Activated naive CD4-positive, alpha-beta T cell treated with anti-CD3 and anti-CD28 coated beads for 36 hours (primary cell): ENCODE measurements at regions of chr4 and their contacts with region 1.

Region 1: DNA sequence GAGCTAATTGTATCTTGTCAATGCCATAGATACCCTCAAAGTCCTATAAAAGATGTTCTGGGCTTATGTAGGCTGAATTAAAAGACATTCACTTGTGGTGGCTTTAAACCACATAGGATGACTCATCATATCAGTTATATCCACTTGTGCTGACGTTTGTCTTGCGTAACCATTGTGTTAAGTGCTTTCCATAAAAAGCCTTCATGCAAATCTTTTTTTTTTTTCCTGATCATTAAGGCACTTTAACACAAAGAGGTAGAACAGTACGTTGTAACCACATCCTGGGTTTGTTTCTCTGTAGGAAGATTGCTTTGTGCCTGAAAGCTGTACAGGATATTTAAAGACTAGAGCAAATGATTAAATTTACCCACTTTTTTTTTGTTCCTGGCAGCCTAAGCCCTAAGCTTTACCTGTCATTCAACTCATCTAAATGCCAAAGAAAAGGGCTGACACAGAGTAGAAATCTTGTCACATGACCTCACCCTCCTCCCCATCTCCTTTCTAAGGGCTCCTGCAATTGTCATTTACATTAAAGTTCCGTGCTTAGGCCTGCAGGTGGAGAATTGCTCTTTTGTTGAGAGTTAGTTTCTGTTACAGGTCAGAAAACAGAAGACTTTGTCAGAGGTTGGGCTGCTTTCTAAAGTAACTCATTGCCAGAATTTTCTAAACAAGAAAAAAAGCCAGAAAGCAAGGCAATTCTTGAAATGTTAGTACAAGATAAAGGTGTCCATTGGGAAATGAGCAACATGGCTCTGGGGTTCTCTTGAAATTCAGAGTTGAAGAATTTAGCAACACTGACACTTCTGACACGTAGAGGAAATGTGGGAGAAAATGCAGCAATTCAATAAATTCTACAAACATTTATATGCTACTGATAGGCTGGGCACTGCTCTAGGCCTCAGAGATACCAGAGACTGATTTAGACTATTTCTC is 555.6 kb downstream of the PPARGC1A start:
- DNase-seq: peak; percentile 69
- H3K4me3 Mint-ChIP-seq: peak overlapping the region; percentile 45
- H3K27ac Mint-ChIP-seq: peak overlapping the region; percentile 98
- H3K4me1 Mint-ChIP-seq: peaks cover 38% of the 10 kb centered on the region
- H3K27me3 Mint-ChIP-seq: no peaks in the 10 kb centered on the region

Region 2: DNA sequence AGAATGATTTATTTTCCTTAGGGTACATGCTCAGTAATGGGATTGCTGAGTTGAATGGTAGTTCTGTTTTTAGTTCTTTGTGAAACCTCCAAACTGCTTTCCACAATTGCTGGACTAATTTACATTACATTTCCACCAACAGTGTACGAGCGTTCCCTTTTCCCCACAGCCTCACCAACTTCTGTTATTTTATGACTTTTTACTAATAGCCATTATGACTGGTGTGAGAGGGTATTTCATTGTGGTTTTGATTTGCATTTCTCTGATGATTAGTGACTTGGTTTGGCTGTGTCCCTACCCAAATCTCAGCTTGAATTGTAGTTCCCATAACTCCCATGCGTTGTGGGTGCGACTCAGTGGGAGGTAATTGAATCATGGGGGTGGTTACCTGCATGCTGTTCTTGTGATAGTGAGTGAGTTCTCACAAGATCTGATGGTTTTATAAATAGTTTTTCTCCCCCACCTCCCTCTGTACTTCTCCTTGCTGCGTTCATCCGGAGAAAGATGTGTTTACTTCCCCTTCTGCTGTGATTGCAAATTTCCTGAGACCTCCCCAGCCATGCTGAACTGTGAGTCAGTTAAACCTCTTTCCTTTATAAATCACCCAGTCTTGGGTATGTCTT is 546.3 kb before region 1 on chr4:
- CTCF ChIA-PET with region 1: no interaction called
- intact Hi-C with region 1: no loop called
- DNase-seq: no peak
- H3K4me3 Mint-ChIP-seq: no peak overlapping the region
- H3K27ac Mint-ChIP-seq: no peak overlapping the region
- H3K4me1 Mint-ChIP-seq: no peaks in the 10 kb centered on the region
- H3K27me3 Mint-ChIP-seq: peaks cover 4% of the 10 kb centered on the region

Region 3: DNA sequence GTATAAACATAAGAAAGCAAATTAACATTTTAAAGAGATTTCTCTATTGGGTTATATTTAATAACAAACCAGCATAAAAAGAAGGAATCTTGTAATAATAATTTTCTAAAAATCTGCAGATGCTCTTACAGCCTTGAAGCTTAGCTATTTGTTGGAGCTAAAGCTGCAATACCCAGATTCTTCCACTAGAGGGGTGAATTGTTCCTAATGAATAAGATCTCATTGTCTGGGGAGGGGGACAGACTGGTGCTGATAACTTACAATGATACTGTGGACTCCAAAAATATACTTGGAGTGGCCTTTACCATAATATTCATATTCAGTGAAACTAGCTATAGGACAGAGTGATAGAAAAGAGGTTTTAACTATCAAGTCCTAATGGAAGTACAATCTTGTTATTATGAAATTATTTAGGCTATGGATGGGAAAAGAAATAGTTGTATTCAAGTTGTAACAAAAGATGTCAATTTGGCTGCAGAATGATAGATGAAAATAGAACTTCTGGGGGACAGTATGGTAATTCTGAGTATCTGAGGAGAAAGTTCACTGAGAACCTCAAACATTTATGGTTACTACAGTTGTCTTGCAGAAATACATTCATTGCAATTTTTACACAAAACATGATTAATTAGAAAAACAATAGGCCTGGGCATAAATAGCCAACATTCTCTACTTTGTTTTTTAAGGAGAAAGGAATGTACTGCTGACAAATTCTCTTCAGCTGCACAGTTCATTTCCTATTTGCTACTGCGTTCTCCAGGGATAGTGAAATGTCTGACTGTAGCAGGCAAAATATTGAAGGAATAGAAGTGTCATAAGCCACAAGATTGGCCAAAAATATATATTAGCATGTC is 198.2 kb before region 1 on chr4:
- CTCF ChIA-PET with region 1: no interaction called
- intact Hi-C with region 1: loop called (anchors 10 kb)
- DNase-seq: no peak
- H3K4me3 Mint-ChIP-seq: no peak overlapping the region
- H3K27ac Mint-ChIP-seq: no peak overlapping the region
- H3K4me1 Mint-ChIP-seq: no peaks in the 10 kb centered on the region
- H3K27me3 Mint-ChIP-seq: peaks cover 10% of the 10 kb centered on the region

Region 4: GRCh38 chr4:23373261-23373660 is 39.0 kb after region 1 on chr4:
- CTCF ChIA-PET with region 1: no interaction called
- intact Hi-C with region 1: loop called (anchors 1 kb)
- DNase-seq: peak; percentile 69
- H3K4me3 Mint-ChIP-seq: no peak overlapping the region
- H3K27ac Mint-ChIP-seq: peak overlapping the region; percentile 15
- H3K4me1 Mint-ChIP-seq: peaks cover 5% of the 10 kb centered on the region
- H3K27me3 Mint-ChIP-seq: no peaks in the 10 kb centered on the region

Region 5: GRCh38 chr4:23717528-23718248 is 383.5 kb after region 1 on chr4:
- CTCF ChIA-PET with region 1: no interaction called
- intact Hi-C with region 1: loop called (anchors 1 kb)
- DNase-seq: peak; percentile 13
- H3K4me3 Mint-ChIP-seq: no peak overlapping the region
- H3K27ac Mint-ChIP-seq: no peak overlapping the region
- H3K4me1 Mint-ChIP-seq: no peaks in the 10 kb centered on the region
- H3K27me3 Mint-ChIP-seq: no peaks in the 10 kb centered on the region

Region 6: GRCh38 chr4:24472514-24473308 is 1138.5 kb after region 1 on chr4:
- CTCF ChIA-PET with region 1: no interaction called
- intact Hi-C with region 1: loop called (anchors 5 kb)
- DNase-seq: peak; percentile 47
- H3K4me3 Mint-ChIP-seq: peak overlapping the region; percentile 83
- H3K27ac Mint-ChIP-seq: no peak overlapping the region
- H3K4me1 Mint-ChIP-seq: peaks cover 29% of the 10 kb centered on the region
- H3K27me3 Mint-ChIP-seq: peaks cover 64% of the 10 kb centered on the region

Region 7: GRCh38 chr4:25234390-25235370 is 1900.5 kb after region 1 on chr4:
- CTCF ChIA-PET with region 1: no interaction called
- intact Hi-C with region 1: loop called (anchors 2 kb)
- DNase-seq: peak; percentile 63
- H3K4me3 Mint-ChIP-seq: peak overlapping the region; percentile 92
- H3K27ac Mint-ChIP-seq: peak overlapping the region; percentile 91
- H3K4me1 Mint-ChIP-seq: peaks cover 40% of the 10 kb centered on the region
- H3K27me3 Mint-ChIP-seq: no peaks in the 10 kb centered on the region